ENCODE measurements at regions of chr5 and their contacts with region 1.

Region 1: DNA sequence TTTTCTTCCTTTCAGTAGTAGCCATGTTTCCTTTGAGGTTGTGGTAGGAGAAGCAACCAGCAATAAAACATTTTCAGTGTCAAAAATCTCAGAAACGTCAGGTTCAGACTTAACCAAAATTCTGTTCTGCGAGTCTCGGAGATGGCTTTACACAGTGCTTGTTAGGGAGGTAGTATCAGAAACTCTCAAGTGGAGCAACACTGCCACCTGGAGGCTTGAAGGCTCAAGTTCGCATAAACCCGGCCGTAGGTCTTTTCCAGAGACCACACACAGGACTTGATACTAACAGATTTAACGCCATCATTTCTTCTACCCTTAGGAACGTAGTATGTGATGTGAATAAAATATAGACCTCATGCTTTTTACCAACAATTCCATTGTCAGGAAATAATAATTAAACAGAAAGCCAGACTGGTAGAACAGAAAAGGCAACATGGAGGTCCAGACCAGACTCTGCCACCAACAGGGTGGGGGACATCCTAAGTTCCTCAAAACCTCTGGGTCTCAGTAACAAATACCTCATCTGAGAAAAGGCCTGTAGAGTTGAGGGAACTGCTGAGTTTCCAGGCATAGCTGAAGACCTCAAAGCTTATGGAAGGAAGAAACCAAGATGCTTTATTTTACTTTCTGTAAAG is 8.5 kb downstream of the PTGER4 start:
- DNase-seq: peak; percentile 91
- H3K4me3 Mint-ChIP-seq: peak overlapping the region; percentile 93
- H3K27ac Mint-ChIP-seq: peak overlapping the region; percentile 97
- H3K4me1 Mint-ChIP-seq: peaks cover 65% of the 10 kb centered on the region
- H3K27me3 Mint-ChIP-seq: no peaks in the 10 kb centered on the region

Region 2: GRCh38 chr5:39783756-39784421 is 904.4 kb before region 1 on chr5:
- CTCF ChIA-PET with region 1: no interaction called
- POLR2A ChIA-PET with region 1: no interaction called
- intact Hi-C with region 1: no loop called
- DNase-seq: no peak
- H3K4me3 Mint-ChIP-seq: no peak overlapping the region
- H3K27ac Mint-ChIP-seq: no peak overlapping the region
- H3K4me1 Mint-ChIP-seq: peaks cover 4% of the 10 kb centered on the region
- H3K27me3 Mint-ChIP-seq: peaks cover 10% of the 10 kb centered on the region

Region 3: DNA sequence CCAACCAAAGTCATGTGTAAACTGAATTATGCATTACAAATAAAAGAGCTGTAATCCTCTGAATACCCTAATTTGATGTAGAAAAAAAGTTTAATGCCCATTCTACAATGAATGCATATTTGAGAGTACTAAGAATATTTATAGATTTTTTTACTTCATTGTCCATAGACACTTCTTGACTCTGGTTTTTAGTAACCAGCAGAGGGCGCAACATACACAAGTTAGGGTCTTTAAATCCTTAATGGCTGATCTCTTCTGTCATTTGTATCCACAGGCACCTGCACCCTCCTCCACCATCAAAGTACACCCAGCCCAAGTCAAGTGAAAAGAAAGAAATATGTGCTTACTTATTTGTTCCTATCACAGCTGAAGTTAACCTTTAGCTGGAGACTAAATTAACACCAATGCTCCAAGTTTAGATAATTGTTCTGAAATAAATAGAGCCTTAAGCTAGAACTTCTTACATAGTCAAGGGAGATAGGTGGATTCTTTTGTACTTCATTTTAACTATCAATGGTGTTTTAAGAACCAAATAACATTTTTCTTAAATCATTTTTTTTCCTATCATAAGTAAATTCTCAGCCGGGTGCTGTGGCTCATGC is 739.3 kb before region 1 on chr5:
- CTCF ChIA-PET with region 1: interaction called, 18 read pairs
- POLR2A ChIA-PET with region 1: no interaction called
- intact Hi-C with region 1: loop called (anchors 1 kb)
- DNase-seq: peak; percentile 54
- H3K4me3 Mint-ChIP-seq: no peak overlapping the region
- H3K27ac Mint-ChIP-seq: peak overlapping the region; percentile 4
- H3K4me1 Mint-ChIP-seq: peaks cover 3% of the 10 kb centered on the region
- H3K27me3 Mint-ChIP-seq: no peaks in the 10 kb centered on the region

Region 4: GRCh38 chr5:40210694-40211093 is 477.6 kb before region 1 on chr5:
- CTCF ChIA-PET with region 1: interaction called, 3 read pairs
- POLR2A ChIA-PET with region 1: no interaction called
- intact Hi-C with region 1: loop called (anchors 2 kb)
- DNase-seq: no peak
- H3K4me3 Mint-ChIP-seq: no peak overlapping the region
- H3K27ac Mint-ChIP-seq: peak overlapping the region; percentile 94
- H3K4me1 Mint-ChIP-seq: peaks cover 65% of the 10 kb centered on the region
- H3K27me3 Mint-ChIP-seq: no peaks in the 10 kb centered on the region

Region 5: GRCh38 chr5:40404613-40405012 is 283.6 kb before region 1 on chr5:
- CTCF ChIA-PET with region 1: interaction called, 6 read pairs
- POLR2A ChIA-PET with region 1: interaction called, 26 read pairs
- intact Hi-C with region 1: no loop called
- DNase-seq: no peak
- H3K4me3 Mint-ChIP-seq: no peak overlapping the region
- H3K27ac Mint-ChIP-seq: peak overlapping the region; percentile 99
- H3K4me1 Mint-ChIP-seq: peaks cover 90% of the 10 kb centered on the region
- H3K27me3 Mint-ChIP-seq: no peaks in the 10 kb centered on the region

Region 6: DNA sequence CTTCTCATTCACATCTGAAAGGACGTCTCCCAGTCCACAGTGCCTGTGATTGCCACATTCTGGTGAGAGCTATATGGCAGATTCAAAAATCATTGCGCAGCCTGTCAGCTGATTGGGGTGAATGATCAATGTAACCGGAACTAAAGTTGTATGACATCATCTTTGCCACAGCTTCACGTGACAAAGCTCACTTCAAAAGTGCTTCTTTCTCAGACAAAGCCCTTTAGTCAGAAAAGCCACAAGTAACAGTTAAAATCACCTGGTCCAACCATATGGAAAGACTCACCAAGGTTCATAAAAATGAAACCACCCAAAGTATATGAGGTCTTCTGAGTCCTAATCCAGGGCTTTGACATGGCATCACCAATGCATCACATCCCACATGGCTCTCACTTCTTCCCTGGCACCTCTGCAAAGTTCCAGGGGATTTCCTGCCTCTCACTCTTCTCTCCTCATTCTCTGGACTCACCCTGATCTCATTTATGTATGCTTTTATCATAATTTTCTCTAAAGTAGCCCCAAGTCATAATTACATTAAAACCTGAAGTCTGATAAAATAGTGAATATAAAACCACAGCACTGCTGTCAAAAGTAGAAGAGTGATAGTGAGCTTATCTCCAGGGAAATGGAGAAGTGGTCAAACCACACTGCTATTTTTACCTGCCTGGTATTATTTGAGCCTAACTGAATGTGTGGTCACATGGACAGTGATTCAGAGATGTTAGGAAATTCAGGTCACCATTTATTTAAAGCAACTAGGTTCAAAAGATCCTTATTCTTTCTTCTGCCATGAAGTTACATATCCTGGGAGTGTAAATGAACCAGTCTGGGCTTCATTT is 201.6 kb before region 1 on chr5:
- CTCF ChIA-PET with region 1: interaction called, 6 read pairs
- POLR2A ChIA-PET with region 1: interaction called, 6 read pairs
- intact Hi-C with region 1: loop called (anchors 1 kb)
- DNase-seq: peak; percentile 77
- H3K4me3 Mint-ChIP-seq: peak overlapping the region; percentile 7
- H3K27ac Mint-ChIP-seq: peak overlapping the region; percentile 84
- H3K4me1 Mint-ChIP-seq: peaks cover 81% of the 10 kb centered on the region
- H3K27me3 Mint-ChIP-seq: no peaks in the 10 kb centered on the region

Region 7: DNA sequence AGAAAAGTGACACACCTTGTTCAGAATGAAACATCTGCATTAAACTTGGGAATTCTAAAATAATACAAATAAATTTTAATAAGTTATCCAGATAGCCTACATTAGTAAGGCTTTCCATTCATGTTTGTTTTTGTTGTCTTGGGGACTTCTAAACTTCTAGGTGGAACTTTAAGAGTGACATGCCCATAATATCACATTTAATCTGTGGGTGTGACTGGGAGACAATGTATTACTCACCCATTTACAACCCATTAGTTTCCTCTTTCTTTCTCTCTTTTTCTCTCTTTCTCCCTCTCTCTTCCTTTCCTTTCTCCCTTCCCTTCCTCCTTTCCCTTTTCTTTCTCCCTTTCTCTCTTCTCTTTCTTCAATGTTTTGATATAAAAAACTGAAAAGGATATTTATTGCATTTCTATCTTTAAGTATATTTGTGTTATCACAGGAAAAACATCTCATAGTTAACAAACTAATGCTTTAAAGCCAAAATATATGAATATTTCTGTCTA is 21.0 kb before region 1 on chr5:
- CTCF ChIA-PET with region 1: no interaction called
- POLR2A ChIA-PET with region 1: no interaction called
- intact Hi-C with region 1: no loop called
- DNase-seq: no peak
- H3K4me3 Mint-ChIP-seq: no peak overlapping the region
- H3K27ac Mint-ChIP-seq: no peak overlapping the region
- H3K4me1 Mint-ChIP-seq: peaks cover 26% of the 10 kb centered on the region
- H3K27me3 Mint-ChIP-seq: no peaks in the 10 kb centered on the region

Region 8: DNA sequence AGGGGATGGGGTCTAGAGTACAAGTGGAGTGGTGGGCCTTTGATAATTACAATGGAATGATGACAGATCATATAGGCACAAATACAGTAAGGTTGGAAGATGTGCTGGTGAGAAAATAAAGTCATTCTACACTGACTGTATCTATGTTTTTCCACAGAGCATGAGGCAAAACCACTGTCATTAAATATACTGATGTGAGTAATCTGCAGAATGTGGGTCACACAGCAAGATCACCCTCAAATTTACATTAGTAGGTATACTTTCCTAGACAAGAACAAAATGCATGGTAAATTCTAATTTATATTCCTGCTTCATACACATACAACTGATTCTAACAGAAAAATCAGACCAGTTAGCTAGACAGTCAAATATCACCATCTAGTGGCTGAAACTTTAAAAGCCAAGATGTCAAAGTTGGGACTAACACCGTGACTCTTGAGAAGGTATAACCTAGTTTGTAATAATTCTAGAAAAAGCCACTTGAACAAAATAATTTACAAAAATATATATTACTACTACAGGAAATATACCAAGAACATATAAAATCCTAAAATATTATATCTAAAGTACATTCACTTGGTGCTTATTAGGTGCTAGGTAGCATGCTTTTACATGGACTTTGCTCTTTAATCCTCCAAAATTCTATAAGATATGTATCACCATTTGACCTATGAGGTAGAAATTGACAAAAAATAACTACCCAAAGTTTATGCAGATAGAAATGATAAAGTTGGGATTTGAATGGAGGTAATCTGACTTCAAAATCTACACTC is 48.0 kb after region 1 on chr5:
- CTCF ChIA-PET with region 1: interaction called, 8 read pairs
- POLR2A ChIA-PET with region 1: no interaction called
- intact Hi-C with region 1: loop called (anchors 1 kb)
- DNase-seq: no peak
- H3K4me3 Mint-ChIP-seq: no peak overlapping the region
- H3K27ac Mint-ChIP-seq: no peak overlapping the region
- H3K4me1 Mint-ChIP-seq: peaks cover 23% of the 10 kb centered on the region
- H3K27me3 Mint-ChIP-seq: no peaks in the 10 kb centered on the region